Caco-2 (cell line): ENCODE measurements at regions of chr9 and their contacts with region 1.

Region 1: GRCh38 chr9:112793213-112793810 is 42.8 kb downstream of the SNX30 start:
- DNase-seq: peak; percentile 81 to 85
- H3K4me3 ChIP-seq: no peak overlapping the region
- H3K4me3 Mint-ChIP-seq: no peak overlapping the region
- H3K27ac Mint-ChIP-seq: no peak overlapping the region
- H3K4me1 ChIP-seq: no peaks in the 10 kb centered on the region
- H3K4me1 Mint-ChIP-seq: no peaks in the 10 kb centered on the region
- H3K27me3 ChIP-seq: no peaks in the 10 kb centered on the region
- H3K27me3 Mint-ChIP-seq: no peaks in the 10 kb centered on the region
- CTCF ChIP-seq: peak; percentile 83 to 90

Region 2: GRCh38 chr9:112717661-112718341 is 75.5 kb before region 1 on chr9 and contains the start of gene INIP:
- CTCF ChIA-PET with region 1: interaction called, 18 read pairs
- POLR2A ChIA-PET with region 1: no interaction called
- intact Hi-C with region 1: loop called (anchors 1 kb)
- DNase-seq: peak; percentile 98
- H3K4me3 ChIP-seq: peak within 1 kb of the TSS; percentile 46
- H3K4me3 Mint-ChIP-seq: peak within 1 kb of the TSS; percentile 88
- H3K27ac Mint-ChIP-seq: peak within 1 kb of the TSS; percentile 87
- H3K4me1 ChIP-seq: no peaks in the 10 kb centered on the region
- H3K4me1 Mint-ChIP-seq: peaks cover 7% of the 10 kb centered on the region
- H3K27me3 ChIP-seq: no peaks in the 10 kb centered on the region
- H3K27me3 Mint-ChIP-seq: no peaks in the 10 kb centered on the region
- CTCF ChIP-seq: no peak
- total RNA-seq, gene INIP: 30.2 and 31.9 TPM in 2 replicates

Region 3: DNA sequence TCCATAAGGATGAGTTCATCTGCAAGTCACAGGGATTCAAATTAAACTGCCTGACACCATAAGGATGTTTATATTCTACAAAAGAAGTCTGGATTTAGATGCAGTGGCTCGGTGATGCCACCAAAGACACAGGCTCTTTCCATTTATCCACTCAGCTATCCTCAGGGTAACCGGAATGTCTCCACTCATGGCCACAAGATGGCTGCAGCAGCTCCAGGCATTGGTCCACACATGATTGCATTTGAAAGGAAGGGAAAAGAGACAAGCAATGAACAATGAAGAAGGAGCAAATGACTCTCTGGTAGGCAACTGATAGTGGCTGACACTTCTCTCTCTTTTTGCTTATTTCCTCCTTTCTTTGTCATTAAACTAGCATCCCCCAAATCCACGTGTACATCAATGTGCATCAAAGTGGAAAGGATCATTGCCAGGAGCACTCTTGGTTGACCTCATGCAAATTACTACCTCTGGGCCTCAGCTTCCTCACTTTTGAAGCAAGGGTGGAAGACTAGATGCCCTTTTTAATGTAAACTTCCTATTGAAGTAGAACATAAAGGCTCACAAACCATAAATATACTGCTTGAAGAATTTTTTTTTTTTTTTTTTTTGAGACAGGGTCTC is 50.0 kb before region 1 on chr9:
- CTCF ChIA-PET with region 1: interaction called, 10 read pairs
- POLR2A ChIA-PET with region 1: no interaction called
- intact Hi-C with region 1: loop called (anchors 1 kb)
- DNase-seq: peak in 1 of 2 experiments; percentile 36
- H3K4me3 ChIP-seq: no peak overlapping the region
- H3K4me3 Mint-ChIP-seq: no peak overlapping the region
- H3K27ac Mint-ChIP-seq: no peak overlapping the region
- H3K4me1 ChIP-seq: peaks cover 6% of the 10 kb centered on the region; the same call in 1 of the 2 replicates
- H3K4me1 Mint-ChIP-seq: peaks cover 6% of the 10 kb centered on the region
- H3K27me3 ChIP-seq: no peaks in the 10 kb centered on the region
- H3K27me3 Mint-ChIP-seq: no peaks in the 10 kb centered on the region
- CTCF ChIP-seq: peak; percentile 24 to 38

Region 4: GRCh38 chr9:112750111-112750767 is 43.1 kb before region 1 on chr9 and contains the start of gene SNX30:
- CTCF ChIA-PET with region 1: interaction called, 3 read pairs
- POLR2A ChIA-PET with region 1: no interaction called
- intact Hi-C with region 1: loop called (anchors 1 kb)
- DNase-seq: peak; percentile 93
- H3K4me3 ChIP-seq: peak within 1 kb of the TSS; percentile 99
- H3K4me3 Mint-ChIP-seq: peak within 1 kb of the TSS; percentile 96
- H3K27ac Mint-ChIP-seq: peak within 1 kb of the TSS; percentile 85
- H3K4me1 ChIP-seq: peaks cover 42% of the 10 kb centered on the region
- H3K4me1 Mint-ChIP-seq: peaks cover 25% of the 10 kb centered on the region
- H3K27me3 ChIP-seq: no peaks in the 10 kb centered on the region
- H3K27me3 Mint-ChIP-seq: no peaks in the 10 kb centered on the region
- CTCF ChIP-seq: peak in 1 of 2 experiments; percentile 5
- total RNA-seq, gene SNX30: 20.6 and 21.8 TPM in 2 replicates

Region 5: DNA sequence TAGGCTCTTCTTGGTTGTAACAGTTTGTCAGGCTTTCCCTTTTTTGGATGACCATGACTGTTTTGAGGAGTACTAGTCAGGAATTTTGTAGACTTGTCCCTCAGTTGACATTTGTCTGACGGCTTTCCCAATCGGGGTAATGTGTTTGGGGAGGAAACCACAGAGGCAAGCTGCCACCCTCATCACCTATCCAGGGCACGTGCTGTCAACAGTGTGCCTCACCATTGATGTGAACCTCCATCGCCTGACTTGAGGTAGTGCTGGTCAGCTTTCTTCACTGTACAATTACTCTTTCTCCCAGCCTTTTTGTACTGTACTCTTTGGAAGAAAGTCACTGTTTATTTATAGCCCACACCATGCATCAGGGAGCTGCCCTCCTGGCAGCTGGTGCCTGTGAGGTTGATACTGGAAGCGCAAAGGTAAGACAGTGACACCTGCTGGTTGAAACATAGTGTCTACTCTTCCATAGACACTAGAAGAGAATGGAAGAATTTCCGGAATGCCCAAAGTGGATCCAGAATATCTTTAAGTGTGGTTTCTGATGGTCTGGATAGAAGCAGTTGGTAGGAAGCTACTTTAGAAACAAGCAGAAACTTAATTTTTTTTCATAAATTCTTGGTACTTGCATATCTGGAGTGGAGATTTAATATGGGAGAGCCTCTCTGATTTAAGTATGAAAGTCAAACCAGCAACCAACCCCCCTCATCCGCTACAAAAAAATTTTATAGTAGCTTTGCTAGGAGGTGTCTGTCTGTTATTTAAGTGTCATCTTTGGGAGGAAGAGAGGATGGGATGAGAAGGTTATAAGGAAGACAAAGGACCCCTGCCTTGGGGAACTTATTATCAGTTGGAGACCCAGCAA is 26.6 kb after region 1 on chr9:
- CTCF ChIA-PET with region 1: no interaction called
- POLR2A ChIA-PET with region 1: no interaction called
- intact Hi-C with region 1: loop called (anchors 1 kb)
- DNase-seq: peak; percentile 51 to 57
- H3K4me3 ChIP-seq: no peak overlapping the region
- H3K4me3 Mint-ChIP-seq: no peak overlapping the region
- H3K27ac Mint-ChIP-seq: peak overlapping the region; percentile 14
- H3K4me1 ChIP-seq: peaks cover 4% of the 10 kb centered on the region; the same call in 1 of the 2 replicates
- H3K4me1 Mint-ChIP-seq: peaks cover 13% of the 10 kb centered on the region
- H3K27me3 ChIP-seq: no peaks in the 10 kb centered on the region
- H3K27me3 Mint-ChIP-seq: no peaks in the 10 kb centered on the region
- CTCF ChIP-seq: peak; percentile 65 to 72